MCF 10A (cell line): ENCODE measurements at regions of chr1 and their contacts with region 1.

Region 1: DNA sequence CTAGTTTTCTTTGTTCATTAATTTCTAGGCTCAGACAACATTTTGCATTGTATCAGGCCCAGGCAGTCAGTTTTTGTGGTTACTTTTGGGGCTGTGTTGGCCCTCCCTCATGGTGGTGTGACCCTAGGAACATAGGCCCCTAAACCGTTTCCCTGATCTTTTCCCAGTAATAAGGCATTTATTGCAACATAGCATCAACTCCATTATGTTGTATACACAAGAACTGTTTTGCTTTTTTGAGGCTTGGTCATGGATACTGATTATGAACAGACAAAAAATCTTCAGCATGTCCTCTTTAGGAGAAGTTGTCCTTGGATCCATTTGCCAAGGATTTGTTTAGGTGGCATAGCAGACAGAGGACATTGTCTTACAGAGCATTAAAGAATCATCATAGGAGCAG is 10.3 kb downstream of the B3GALT2 start:
- DNase-seq: no peak
- H3K4me3 Mint-ChIP-seq: no peak overlapping the region
- H3K27ac Mint-ChIP-seq: no peak overlapping the region
- H3K4me1 Mint-ChIP-seq: peaks cover 14% of the 10 kb centered on the region
- H3K27me3 Mint-ChIP-seq: no peaks in the 10 kb centered on the region
- CTCF ChIP-seq: no peak

Region 2: DNA sequence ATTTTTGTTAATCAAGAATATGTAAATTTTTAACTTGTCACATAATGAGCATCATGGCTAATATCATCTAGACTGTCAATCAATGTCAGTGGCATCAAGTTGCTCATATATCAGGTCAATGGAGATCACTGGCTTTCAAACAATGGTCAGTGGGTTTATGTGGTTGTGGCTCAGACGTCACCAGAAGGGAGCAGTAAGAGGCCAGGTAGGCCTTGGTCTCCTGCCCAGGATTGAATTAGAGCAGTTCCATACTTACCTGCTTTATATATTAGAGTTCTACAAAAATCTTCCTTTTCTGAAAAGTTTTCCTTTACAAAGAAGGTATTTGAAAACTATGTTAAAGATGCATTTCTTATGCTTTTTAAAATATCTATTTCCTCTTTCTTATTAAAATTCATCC is 216.6 kb after region 1 on chr1:
- CTCF ChIA-PET with region 1: no interaction called
- POLR2A ChIA-PET with region 1: no interaction called
- intact Hi-C with region 1: loop called (anchors 2 kb)
- DNase-seq: peak; percentile 9
- H3K4me3 Mint-ChIP-seq: no peak overlapping the region
- H3K27ac Mint-ChIP-seq: no peak overlapping the region
- H3K4me1 Mint-ChIP-seq: no peaks in the 10 kb centered on the region
- H3K27me3 Mint-ChIP-seq: no peaks in the 10 kb centered on the region
- CTCF ChIP-seq: no peak